Activated CD4-positive, alpha-beta T cell treated with anti-CD3 and anti-CD28 coated beads, Interleukin-2, amount 10 ng/mL, durations not matched to agents 24 days and 14 days (primary cell): ENCODE measurements at regions of chr10 and their contacts with region 1.

Region 1: GRCh38 chr10:97072851-97073665 is 112.7 kb downstream of the SLIT1 start:
- DNase-seq: peak; percentile 93
- H3K4me3 Mint-ChIP-seq: no peak overlapping the region
- H3K27ac Mint-ChIP-seq: no peak overlapping the region
- H3K4me1 Mint-ChIP-seq: peaks cover 8% of the 10 kb centered on the region
- H3K27me3 Mint-ChIP-seq: peaks cover 10% of the 10 kb centered on the region

Region 2: DNA sequence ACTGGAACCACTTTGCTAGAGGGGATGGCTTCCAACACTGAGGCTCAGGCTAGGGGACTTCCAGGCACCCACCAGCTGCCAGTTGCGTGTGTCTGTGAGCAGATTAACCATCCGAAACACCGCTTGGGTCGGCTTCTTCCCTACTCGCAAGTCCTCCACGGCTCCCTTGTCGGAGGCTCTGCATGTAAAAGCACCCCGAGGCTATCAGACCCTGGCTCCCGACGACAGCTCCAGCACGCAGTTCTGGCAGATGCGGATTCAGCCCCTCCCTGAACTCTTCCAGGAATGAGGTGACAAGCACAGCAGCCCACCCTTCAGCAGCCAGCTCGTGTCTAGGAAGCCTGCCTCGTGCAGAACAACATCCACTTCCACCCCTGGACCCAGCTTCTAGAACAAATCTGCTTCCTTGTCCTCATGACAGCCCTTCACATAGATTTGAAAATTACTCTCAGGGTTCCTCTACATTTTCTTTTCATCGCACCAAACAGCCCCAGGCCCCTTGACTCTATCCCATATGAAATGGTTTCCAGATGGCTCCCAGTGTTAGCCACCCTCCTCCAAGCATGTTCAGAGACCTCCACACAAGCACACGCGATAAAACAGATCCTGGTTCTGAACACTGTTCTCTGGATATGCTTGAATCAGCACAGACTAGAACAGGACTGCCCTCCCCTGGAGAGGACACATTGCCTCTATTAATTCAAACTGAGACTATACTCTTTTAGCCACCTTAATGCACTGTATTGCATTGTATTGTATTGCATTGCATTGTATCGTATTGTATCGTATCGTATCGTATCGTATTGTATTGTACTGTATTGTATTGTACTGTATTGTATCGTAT is 68.1 kb after region 1 on chr10:
- intact Hi-C with region 1: no loop called
- DNase-seq: no peak
- H3K4me3 Mint-ChIP-seq: no peak overlapping the region
- H3K27ac Mint-ChIP-seq: no peak overlapping the region
- H3K4me1 Mint-ChIP-seq: no peaks in the 10 kb centered on the region
- H3K27me3 Mint-ChIP-seq: peaks cover 17% of the 10 kb centered on the region

Region 3: GRCh38 chr10:97210543-97210961 is 137.5 kb after region 1 on chr10:
- intact Hi-C with region 1: loop called (anchors 1 kb)
- DNase-seq: peak; percentile 91
- H3K4me3 Mint-ChIP-seq: no peak overlapping the region
- H3K27ac Mint-ChIP-seq: no peak overlapping the region
- H3K4me1 Mint-ChIP-seq: no peaks in the 10 kb centered on the region
- H3K27me3 Mint-ChIP-seq: no peaks in the 10 kb centered on the region

Region 4: GRCh38 chr10:97234400-97234799 is 161.3 kb after region 1 on chr10:
- intact Hi-C with region 1: loop called (anchors 1 kb)
- DNase-seq: peak; percentile 64
- H3K4me3 Mint-ChIP-seq: no peak overlapping the region
- H3K27ac Mint-ChIP-seq: no peak overlapping the region
- H3K4me1 Mint-ChIP-seq: peaks cover 10% of the 10 kb centered on the region
- H3K27me3 Mint-ChIP-seq: no peaks in the 10 kb centered on the region